Brain microvascular endothelial cell (primary cell): ENCODE measurements at regions of chr2 and their contacts with region 1.

Region 1: GRCh38 chr2:218399391-218400166 is at the start of gene CTDSP1:
- DNase-seq: peak; percentile 97
- H3K4me3 ChIP-seq: peak within 1 kb of the TSS; percentile 76
- H3K27ac ChIP-seq: peak within 1 kb of the TSS; percentile 61
- H3K27me3 ChIP-seq: no peaks in the 10 kb centered on the region
- CTCF ChIP-seq: no peak

Region 2: DNA sequence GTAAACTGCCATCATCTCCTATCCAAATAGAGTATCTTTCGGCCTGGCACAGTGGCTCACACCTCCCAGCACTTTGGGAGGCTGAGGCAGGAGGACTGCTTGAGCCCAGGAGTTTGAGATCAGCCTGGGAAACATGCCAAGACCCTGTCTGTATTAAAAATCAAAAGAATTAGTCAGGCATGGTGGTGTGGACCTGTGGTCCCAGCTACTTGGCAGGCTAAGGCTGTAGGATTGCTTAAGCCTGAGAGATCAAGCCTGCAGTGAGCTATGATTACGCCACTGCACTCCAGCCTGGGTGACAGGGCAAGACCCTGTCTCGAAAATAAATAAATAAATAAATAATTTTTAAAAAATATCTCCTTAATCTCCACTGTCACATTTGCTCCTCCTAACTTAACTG is 197.3 kb before region 1 on chr2:
- in situ Hi-C with region 1: no loop called
- DNase-seq: no peak
- H3K4me3 ChIP-seq: no peak overlapping the region
- H3K27ac ChIP-seq: no peak overlapping the region
- H3K27me3 ChIP-seq: no peaks in the 10 kb centered on the region
- CTCF ChIP-seq: no peak

Region 3: DNA sequence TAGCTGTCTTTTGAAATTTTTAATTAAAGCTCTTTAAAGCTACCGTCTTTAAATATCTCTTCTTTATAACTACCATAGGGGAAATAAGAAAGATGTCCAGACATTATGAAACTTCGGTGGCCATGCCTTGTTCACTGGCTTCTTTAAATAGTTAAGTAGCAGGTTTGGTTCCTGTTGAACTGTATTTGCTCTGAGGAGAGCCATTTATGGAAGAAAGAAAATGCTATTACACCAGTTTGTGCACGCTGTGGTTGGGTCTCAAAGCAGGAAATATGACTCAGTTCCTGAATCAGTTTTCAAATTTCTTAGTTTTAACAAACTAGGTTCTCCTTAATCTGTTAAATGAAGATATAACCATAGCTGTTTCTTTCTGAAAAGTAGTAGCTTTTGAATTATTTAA is 170.3 kb before region 1 on chr2:
- in situ Hi-C with region 1: no loop called
- DNase-seq: peak; percentile 62
- H3K4me3 ChIP-seq: no peak overlapping the region
- H3K27ac ChIP-seq: peak overlapping the region; percentile 71
- H3K27me3 ChIP-seq: no peaks in the 10 kb centered on the region
- CTCF ChIP-seq: no peak

Region 4: DNA sequence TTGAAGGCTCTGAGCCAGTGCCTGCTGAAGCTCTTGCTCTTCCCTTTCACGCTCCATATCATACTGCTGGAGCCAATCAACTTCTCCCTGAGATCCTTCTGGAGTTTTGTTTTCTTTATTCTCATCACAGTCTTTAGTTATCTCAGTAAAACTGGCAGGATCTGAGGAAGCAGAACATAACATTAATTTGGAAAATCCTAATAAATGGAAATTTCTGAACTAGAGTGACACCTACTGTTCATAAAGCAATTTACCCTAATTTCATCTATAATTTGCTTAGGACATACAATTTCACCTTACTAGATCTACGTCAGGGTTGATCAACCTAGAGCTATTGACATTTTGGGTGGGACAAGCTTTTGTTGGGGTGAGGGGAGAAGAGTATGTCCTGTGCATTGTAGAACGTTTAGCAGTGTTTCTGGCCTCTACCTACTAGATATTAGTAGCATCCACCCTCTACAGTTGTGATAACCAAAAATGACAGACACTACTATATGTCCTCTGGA is 66.5 kb after region 1 on chr2:
- in situ Hi-C with region 1: loop called (anchors 5 kb)
- DNase-seq: no peak
- H3K4me3 ChIP-seq: no peak overlapping the region
- H3K27ac ChIP-seq: no peak overlapping the region
- H3K27me3 ChIP-seq: no peaks in the 10 kb centered on the region
- CTCF ChIP-seq: peak; percentile 38